PC-9 (cell line): ENCODE measurements at regions of chr7 and their contacts with region 1.

Region 1: DNA sequence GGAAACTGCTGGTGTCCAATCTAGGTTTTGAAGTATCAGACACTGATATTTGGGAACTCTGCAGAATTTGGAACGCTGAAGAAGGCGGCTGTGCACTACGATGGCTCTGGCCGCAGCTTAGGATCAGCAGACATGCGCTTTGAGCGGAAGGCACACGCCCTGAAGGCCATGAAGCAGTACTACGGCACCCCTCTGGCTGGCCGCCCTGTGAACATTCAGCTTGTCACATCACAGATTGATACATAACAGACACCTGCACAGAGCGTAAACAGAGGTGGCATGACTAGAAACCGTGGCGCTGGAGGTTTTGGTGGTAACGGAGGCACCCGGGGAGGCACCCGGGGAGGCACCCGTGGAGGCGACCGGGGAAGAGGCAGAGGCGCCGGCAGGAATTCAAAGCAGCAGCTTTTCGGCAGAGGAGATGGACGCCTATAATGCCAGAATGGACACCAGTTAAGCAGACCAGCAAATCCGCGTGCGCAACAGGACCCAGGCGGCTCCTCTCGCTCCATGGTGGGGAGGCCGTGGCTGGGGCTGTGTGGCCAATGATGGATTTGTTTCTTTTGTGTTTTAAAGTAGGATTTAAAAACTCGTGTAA is 22.2 kb upstream of the CCL24 start:
- DNase-seq: no peak
- H3K4me3 ChIP-seq: no peak overlapping the region
- H3K27ac ChIP-seq: no peak overlapping the region
- H3K4me1 ChIP-seq: no peaks in the 10 kb centered on the region
- H3K27me3 ChIP-seq: no peaks in the 10 kb centered on the region
- CTCF ChIP-seq: no peak

Region 2: GRCh38 chr7:75623390-75624133 is 212.2 kb before region 1 on chr7:
- CTCF ChIA-PET with region 1: no interaction called
- POLR2A ChIA-PET with region 1: interaction called, 12 read pairs
- intact Hi-C with region 1: no loop called
- DNase-seq: no peak
- H3K4me3 ChIP-seq: no peak overlapping the region
- H3K27ac ChIP-seq: no peak overlapping the region
- H3K4me1 ChIP-seq: peaks cover 5% of the 10 kb centered on the region
- H3K27me3 ChIP-seq: no peaks in the 10 kb centered on the region
- CTCF ChIP-seq: no peak

Region 3: DNA sequence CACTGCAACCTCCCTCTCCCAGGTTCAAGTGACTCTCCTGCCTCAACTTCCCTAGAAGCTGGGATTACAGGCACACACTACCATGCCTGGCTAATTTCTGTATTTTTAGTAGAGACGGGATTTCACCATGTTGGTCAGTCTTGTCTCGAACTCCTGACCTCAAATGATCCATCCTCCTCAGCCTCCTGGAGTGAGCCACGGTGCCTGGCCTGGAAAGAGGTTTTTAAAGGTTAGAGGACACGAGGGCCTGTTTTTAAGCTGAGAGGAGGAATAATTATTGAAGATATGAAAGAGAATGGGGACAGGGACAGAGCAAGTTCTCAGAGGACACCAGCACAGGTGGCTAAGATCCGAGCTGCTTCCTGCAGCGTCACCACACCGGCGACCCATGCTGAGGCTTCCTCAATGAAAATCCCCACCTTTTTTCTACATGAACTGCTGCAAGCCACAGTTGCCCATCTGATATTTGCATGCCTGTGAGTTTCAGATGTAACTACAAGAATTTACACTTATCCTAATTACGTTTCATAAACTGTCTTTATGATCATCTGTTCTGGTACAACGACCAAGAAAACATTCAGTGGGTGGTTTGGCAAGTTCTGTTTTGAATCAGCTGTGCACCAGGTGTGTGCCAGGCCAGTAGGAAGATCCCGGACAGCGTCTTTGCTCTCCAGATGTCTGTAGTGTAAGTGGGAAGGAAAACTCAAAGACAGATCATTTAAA is 173.0 kb before region 1 on chr7:
- CTCF ChIA-PET with region 1: no interaction called
- POLR2A ChIA-PET with region 1: no interaction called
- intact Hi-C with region 1: no loop called
- DNase-seq: no peak
- H3K4me3 ChIP-seq: no peak overlapping the region
- H3K27ac ChIP-seq: no peak overlapping the region
- H3K4me1 ChIP-seq: no peaks in the 10 kb centered on the region
- H3K27me3 ChIP-seq: no peaks in the 10 kb centered on the region
- CTCF ChIP-seq: no peak

Region 4: GRCh38 chr7:75878769-75879611 is 43.2 kb after region 1 on chr7 and contains the start of gene RHBDD2:
- CTCF ChIA-PET with region 1: interaction called, 22 read pairs
- POLR2A ChIA-PET with region 1: no interaction called
- intact Hi-C with region 1: no loop called
- DNase-seq: peak; percentile 76 to 94
- H3K4me3 ChIP-seq: peak within 1 kb of the TSS; percentile 89
- H3K27ac ChIP-seq: no peak within 1 kb of the TSS
- H3K4me1 ChIP-seq: peaks cover 13% of the 10 kb centered on the region
- H3K27me3 ChIP-seq: no peaks in the 10 kb centered on the region
- CTCF ChIP-seq: no peak
- total RNA-seq, gene RHBDD2: 71.7 and 75.6 TPM in 2 replicates